Left ventricle myocardium inferior (tissue), 1 donor: ENCODE measurements at regions of chr16 and their contacts with region 1.

Region 1: DNA sequence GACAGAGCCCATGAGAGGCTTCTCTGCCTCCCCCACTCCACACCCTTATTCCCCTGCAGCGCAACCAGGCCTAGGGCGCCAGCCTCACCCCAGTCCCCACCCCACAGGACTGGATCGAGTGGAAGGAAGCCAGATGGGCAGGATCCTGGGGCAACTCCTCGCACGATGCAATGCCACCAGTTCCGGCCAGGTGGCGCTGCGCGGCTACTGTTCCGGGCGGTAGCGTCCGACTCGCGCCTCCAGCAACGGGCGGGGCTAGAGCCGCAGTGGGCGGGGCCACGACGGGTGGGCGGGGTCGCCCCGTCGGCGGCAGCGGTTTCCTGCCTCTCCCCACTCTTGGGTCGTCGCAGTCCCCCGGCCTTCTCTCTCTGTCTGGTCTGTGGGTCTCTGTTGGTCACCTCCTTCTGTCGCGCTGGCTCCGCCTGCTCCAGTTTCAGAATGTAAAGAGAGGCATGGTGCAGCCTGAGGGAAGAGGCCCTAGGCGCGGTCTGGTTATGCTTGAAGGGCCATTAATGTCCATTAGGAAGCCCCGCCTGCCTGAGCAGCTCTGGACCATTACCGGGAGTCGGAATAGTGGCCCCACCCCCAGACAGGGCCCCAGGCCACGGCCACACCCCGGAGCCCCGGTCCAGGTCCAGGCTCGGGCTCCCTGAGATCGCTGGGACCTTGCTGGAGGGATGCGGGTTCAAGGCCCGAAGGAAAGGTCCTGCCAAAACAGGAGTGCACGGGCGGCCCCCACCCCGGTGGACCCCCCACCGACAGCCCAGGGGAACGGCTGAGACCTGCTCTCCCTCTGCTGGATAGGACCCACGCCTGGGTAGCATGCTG is 3.4 kb upstream of the NHERF2 start:
- DNase-seq: peak; percentile 94
- H3K4me3 ChIP-seq: peak overlapping the region; percentile 60
- H3K27ac ChIP-seq: peak overlapping the region; percentile 98
- H3K4me1 ChIP-seq: peaks cover 70% of the 10 kb centered on the region
- H3K27me3 ChIP-seq: peaks cover 44% of the 10 kb centered on the region
- CTCF ChIP-seq: peak; percentile 97

Region 2: DNA sequence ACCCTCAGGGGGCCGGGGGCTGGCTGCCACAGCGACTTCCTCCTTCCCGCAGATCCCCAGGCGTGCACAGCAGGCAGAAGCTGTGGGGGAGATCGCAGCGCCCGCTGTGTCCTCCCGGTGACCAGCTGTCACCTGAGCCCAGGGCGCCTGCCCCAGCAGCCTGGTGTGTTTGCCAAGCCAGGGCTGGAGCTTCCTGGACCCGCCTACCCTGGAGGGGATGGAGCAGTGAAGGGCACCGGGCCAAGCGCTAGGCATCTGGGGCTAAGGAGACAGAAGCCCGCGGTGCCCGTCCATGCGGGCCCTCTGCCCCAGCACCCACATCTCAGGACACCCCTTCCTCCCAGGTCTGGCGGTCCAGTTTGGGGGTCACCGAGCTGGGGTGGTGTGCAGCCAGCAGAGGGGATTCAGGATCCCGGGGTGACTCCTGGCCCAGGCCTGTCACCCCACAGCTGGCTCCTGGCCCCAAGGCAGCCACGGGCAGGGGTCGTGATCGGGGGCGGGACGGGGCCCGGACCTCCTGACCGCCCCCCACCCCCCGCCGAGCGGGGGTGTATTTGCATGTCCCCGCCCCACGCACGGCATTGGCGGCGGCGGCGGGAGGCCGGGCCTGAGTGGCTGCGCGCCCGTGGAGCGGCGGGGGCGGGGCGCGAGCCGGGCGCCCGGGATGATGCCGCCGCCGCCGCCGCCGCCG is 124.8 kb after region 1 on chr16 and contains the start of gene RAB26:
- intact Hi-C with region 1: loop called (anchors 10 kb)
- DNase-seq: peak; percentile 83
- H3K4me3 ChIP-seq: peak within 1 kb of the TSS; percentile 66
- H3K27ac ChIP-seq: peak within 1 kb of the TSS; percentile 93
- H3K4me1 ChIP-seq: peaks cover 59% of the 10 kb centered on the region
- H3K27me3 ChIP-seq: no peaks in the 10 kb centered on the region
- CTCF ChIP-seq: no peak
- total RNA-seq, gene RAB26: 1.7 TPM